ENCODE measurements at regions of chr9 and their contacts with region 1.

Region 1: GRCh38 chr9:79403495-79403894 is 168.3 kb upstream of the TLE4 start:
- DNase-seq: peak in 4 of 9 experiments; percentile 5 to 34 (median 12)
- ATAC-seq: no peak
- H3K4me3 ChIP-seq: no peak overlapping the region
- H3K4me3 Mint-ChIP-seq: no peak overlapping the region
- H3K27ac ChIP-seq: no peak overlapping the region
- H3K27ac Mint-ChIP-seq: no peak overlapping the region
- H3K4me1 ChIP-seq: no peaks in the 10 kb centered on the region
- H3K4me1 Mint-ChIP-seq: no peaks in the 10 kb centered on the region
- H3K27me3 ChIP-seq: no peaks in the 10 kb centered on the region
- H3K27me3 Mint-ChIP-seq: no peaks in the 10 kb centered on the region
- CTCF ChIP-seq: peak; percentile 15

Region 2: GRCh38 chr9:78298046-78298765 is 1105.3 kb before region 1 on chr9:
- CTCF ChIA-PET with region 1: no interaction called
- POLR2A ChIA-PET with region 1: no interaction called
- intact Hi-C with region 1: no loop called
- DNase-seq: peak in 2 of 9 experiments; percentile 8 to 15
- ATAC-seq: no peak
- H3K4me3 ChIP-seq: peak overlapping the region; percentile 92 to 99
- H3K4me3 Mint-ChIP-seq: peak overlapping the region; percentile 89
- H3K27ac ChIP-seq: no peak overlapping the region
- H3K27ac Mint-ChIP-seq: peak overlapping the region; percentile 72
- H3K4me1 ChIP-seq: peaks cover 14% of the 10 kb centered on the region
- H3K4me1 Mint-ChIP-seq: peaks cover 21% of the 10 kb centered on the region
- H3K27me3 ChIP-seq: no peaks in the 10 kb centered on the region
- H3K27me3 Mint-ChIP-seq: no peaks in the 10 kb centered on the region
- CTCF ChIP-seq: no peak

Region 3: DNA sequence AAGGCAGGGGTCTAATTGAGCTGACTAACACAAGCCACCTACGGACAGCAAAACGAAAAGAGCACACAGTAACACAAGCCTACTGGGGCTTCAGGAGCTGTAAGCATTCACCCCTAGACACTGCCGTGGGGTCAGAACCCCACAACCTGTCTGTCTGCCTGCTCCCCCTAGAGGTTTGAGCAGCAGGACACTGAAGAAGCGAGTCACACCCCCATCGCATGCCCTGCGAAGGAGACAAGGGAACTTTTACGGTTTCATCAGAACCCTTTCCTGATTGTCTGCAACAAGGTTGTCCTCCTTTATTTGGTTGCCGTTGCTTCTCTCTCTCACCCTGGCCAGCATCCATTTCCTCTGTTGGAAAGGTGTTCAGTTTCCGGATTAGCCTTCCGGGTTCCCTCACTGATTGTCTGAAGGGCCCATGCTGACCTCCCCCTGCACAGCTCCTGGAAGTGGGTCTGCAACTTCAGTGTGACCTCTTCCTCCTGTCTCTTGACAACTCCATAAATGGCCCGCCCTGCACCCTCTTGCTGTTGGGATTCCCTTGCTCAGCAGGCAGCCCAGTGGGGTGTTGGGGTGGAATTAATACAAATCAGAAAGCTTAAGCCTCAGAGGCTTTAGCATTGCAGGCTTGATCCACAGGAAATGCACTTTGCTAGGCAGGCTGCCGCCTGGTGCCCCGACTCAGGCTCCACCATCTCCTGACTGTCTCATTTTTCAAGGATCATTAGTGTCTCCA is 90.6 kb before region 1 on chr9:
- CTCF ChIA-PET with region 1: no interaction called
- POLR2A ChIA-PET with region 1: no interaction called
- intact Hi-C with region 1: no loop called
- DNase-seq: no peak
- ATAC-seq: no peak
- H3K4me3 ChIP-seq: no peak overlapping the region
- H3K4me3 Mint-ChIP-seq: no peak overlapping the region
- H3K27ac ChIP-seq: no peak overlapping the region
- H3K27ac Mint-ChIP-seq: no peak overlapping the region
- H3K4me1 ChIP-seq: no peaks in the 10 kb centered on the region
- H3K4me1 Mint-ChIP-seq: no peaks in the 10 kb centered on the region
- H3K27me3 ChIP-seq: no peaks in the 10 kb centered on the region
- H3K27me3 Mint-ChIP-seq: no peaks in the 10 kb centered on the region
- CTCF ChIP-seq: no peak

Region 4: DNA sequence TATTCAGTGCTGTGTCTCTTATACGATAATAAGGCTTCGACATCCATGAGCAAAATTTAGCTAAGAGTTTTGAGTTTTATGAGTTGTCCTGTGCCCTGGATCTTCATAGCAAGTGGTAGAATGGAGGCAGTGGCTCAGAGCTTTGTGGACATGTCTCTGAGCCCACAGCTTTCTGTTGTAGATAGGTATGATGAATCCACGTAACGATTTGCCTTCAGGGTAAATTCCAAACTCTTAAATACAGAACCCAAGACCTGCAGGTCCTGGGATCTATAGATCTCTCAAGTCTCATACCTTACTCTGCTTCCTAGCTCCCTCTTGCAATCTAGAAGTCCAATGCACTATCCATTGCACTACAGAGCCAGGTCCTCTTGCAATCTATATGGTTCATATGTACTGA is 108.8 kb after region 1 on chr9:
- CTCF ChIA-PET with region 1: no interaction called
- POLR2A ChIA-PET with region 1: no interaction called
- intact Hi-C with region 1: no loop called
- DNase-seq: no peak
- ATAC-seq: no peak
- H3K4me3 ChIP-seq: no peak overlapping the region
- H3K4me3 Mint-ChIP-seq: no peak overlapping the region
- H3K27ac ChIP-seq: no peak overlapping the region
- H3K27ac Mint-ChIP-seq: no peak overlapping the region
- H3K4me1 ChIP-seq: no peaks in the 10 kb centered on the region
- H3K4me1 Mint-ChIP-seq: no peaks in the 10 kb centered on the region
- H3K27me3 ChIP-seq: no peaks in the 10 kb centered on the region
- H3K27me3 Mint-ChIP-seq: no peaks in the 10 kb centered on the region
- CTCF ChIP-seq: no peak

Region 5: DNA sequence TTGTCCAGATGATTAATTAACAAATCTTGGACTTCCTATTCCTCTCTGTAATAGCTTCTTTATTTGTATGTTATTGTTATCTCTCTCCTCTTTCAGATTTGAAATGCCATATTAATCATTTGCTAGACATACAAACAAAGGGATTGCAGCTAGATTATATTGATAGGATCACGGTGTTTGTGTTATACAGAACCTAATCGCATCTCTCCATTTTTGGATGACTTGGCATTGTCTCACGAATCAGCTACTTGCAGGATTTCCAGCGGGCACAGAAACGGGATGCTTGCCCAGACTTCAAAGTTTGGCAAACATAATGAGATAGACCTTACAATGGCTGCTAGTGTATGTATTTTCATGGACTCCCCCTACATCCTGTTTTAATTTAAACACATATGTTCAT is 536.3 kb after region 1 on chr9:
- CTCF ChIA-PET with region 1: no interaction called
- POLR2A ChIA-PET with region 1: no interaction called
- intact Hi-C with region 1: loop called in 1 of 2 experiments (anchors 5 kb)
- DNase-seq: no peak
- ATAC-seq: no peak
- H3K4me3 ChIP-seq: no peak overlapping the region
- H3K4me3 Mint-ChIP-seq: no peak overlapping the region
- H3K27ac ChIP-seq: no peak overlapping the region
- H3K27ac Mint-ChIP-seq: no peak overlapping the region
- H3K4me1 ChIP-seq: no peaks in the 10 kb centered on the region
- H3K4me1 Mint-ChIP-seq: no peaks in the 10 kb centered on the region
- H3K27me3 ChIP-seq: no peaks in the 10 kb centered on the region
- H3K27me3 Mint-ChIP-seq: no peaks in the 10 kb centered on the region
- CTCF ChIP-seq: no peak

Measured in CD8-positive, alpha-beta T cell (primary cell).